ENCODE measurements at regions of chr9 and their contacts with region 1.

Region 1: GRCh38 chr9:20941174-20941690 is 90.2 kb downstream of the HACD4 start:
- DNase-seq: no peak
- ATAC-seq: peak; percentile 75
- H3K4me3 Mint-ChIP-seq: no peak overlapping the region
- H3K27ac Mint-ChIP-seq: no peak overlapping the region
- H3K4me1 Mint-ChIP-seq: peaks cover 3% of the 10 kb centered on the region
- H3K27me3 Mint-ChIP-seq: no peaks in the 10 kb centered on the region
- CTCF ChIP-seq: peak; percentile 90

Region 2: DNA sequence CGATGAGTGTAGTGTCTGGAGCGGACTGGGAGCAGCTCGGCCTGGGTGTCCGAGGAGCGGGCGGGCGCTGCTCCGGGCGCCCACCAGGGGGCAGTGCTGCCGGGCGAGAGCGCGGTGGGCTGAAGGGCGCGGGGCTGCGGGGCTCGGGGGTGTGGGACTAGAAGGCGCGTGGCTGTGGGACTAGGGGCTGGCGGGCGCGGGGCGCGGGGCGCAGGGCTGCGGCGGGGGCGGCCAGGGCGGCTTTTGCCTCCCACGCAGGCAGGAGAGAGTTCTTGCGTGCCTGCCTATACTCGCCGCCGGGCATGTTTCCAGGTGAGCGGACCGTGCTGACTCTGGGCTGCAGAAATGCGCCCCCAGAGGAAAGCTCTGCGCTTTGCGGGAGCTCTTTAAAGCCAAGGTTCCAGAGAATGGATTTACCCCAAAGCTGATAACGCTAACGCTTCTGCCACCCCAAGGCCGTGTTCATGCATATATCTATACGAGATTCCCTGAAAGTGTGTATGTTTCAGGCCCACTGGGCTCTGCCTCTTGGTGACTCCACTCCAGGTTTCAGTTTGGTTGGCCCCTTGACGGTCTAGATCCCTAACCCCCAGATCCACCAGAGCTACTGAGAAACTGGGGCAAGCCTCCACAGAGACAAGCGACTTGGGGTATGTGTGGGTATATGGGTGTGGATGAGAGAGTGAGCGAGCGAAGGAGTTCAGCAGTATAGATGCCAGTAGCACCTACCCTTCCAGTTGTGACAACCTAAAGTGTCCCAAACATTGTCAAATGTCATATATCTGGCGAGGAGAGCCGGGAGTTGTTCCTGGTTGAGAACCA is 1476.3 kb before region 1 on chr9:
- CTCF ChIA-PET with region 1: interaction called, 13 read pairs
- POLR2A ChIA-PET with region 1: no interaction called
- intact Hi-C with region 1: loop called (anchors 2 kb)
- DNase-seq: peak; percentile 77
- ATAC-seq: peak; percentile 93
- H3K4me3 Mint-ChIP-seq: peak overlapping the region; percentile 88
- H3K27ac Mint-ChIP-seq: peak overlapping the region; percentile 69
- H3K4me1 Mint-ChIP-seq: peaks cover 11% of the 10 kb centered on the region
- H3K27me3 Mint-ChIP-seq: no peaks in the 10 kb centered on the region
- CTCF ChIP-seq: peak; percentile 60

Region 3: DNA sequence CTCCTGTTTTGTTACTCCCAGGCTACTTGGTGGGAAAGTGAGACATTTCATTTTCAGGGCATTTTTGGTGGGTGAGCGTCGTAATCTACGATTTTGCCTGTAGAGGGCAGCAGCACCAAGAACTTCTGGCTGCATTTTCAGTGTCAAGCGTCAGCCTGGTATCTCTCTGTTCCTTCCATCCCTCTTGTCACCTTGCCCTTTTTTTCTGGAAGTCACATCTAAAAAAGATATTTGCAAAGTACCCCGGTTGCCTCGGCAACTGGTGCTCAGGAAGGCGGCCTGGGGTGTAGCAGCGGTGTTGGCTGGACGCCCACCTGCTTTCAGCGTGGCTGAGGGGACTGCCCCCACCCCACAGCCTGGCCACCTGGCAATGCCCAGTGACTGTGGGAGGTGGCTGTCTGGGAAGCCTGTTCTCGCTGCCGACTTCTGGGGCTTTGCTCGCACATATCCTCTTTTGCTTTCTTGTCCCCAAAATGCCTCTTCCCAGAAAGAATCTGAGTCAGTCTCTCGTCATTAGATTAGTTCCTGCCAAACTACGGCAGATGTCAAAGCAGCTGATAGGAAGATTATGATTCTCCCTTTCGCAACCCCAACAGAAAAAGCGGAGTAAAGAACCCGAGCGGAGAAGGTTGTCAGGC is 1447.9 kb before region 1 on chr9:
- CTCF ChIA-PET with region 1: no interaction called
- POLR2A ChIA-PET with region 1: no interaction called
- intact Hi-C with region 1: loop called (anchors 1 kb)
- DNase-seq: no peak
- ATAC-seq: peak; percentile 49
- H3K4me3 Mint-ChIP-seq: peak overlapping the region; percentile 16
- H3K27ac Mint-ChIP-seq: no peak overlapping the region
- H3K4me1 Mint-ChIP-seq: peaks cover 8% of the 10 kb centered on the region
- H3K27me3 Mint-ChIP-seq: peaks cover 10% of the 10 kb centered on the region
- CTCF ChIP-seq: no peak

Region 4: DNA sequence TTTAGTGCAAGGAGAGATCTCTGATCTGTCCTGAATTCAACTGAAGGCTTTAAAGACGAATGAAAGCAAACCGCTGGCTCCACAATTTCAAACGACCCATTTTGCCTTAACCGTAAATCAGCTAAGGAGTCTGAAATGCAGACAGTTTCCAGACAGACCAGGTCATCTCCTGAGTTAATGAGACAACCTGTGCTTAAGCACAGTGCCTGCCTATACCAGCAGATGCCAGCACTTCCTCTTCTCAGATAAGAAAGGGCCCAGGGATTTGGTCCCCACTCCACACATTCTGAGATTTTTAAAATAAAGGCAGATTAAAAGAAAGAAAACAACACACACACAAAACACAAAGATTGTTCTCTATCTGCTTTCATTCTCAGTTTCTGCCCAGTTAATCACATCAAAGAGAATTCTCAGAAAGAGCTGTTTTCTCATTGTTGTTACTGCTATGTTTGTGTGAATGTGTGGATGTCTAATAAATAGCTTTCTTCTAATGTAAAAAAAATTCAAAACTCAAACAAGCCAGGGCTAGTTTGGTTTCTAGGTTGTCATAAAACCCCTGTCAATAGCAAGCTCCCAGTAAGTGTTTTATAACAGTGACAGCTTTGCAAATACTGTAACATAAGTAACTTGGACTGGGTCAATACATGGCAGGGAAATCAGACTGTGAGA is 994.7 kb before region 1 on chr9:
- CTCF ChIA-PET with region 1: interaction called, 11 read pairs
- POLR2A ChIA-PET with region 1: no interaction called
- intact Hi-C with region 1: loop called (anchors 1 kb)
- DNase-seq: no peak
- ATAC-seq: no peak
- H3K4me3 Mint-ChIP-seq: no peak overlapping the region
- H3K27ac Mint-ChIP-seq: no peak overlapping the region
- H3K4me1 Mint-ChIP-seq: no peaks in the 10 kb centered on the region
- H3K27me3 Mint-ChIP-seq: peaks cover 18% of the 10 kb centered on the region
- CTCF ChIP-seq: no peak

Region 5: GRCh38 chr9:20356403-20357035 is 584.7 kb before region 1 on chr9:
- CTCF ChIA-PET with region 1: interaction called, 4 read pairs
- POLR2A ChIA-PET with region 1: no interaction called
- intact Hi-C with region 1: loop called (anchors 1 kb)
- DNase-seq: no peak
- ATAC-seq: no peak
- H3K4me3 Mint-ChIP-seq: no peak overlapping the region
- H3K27ac Mint-ChIP-seq: no peak overlapping the region
- H3K4me1 Mint-ChIP-seq: no peaks in the 10 kb centered on the region
- H3K27me3 Mint-ChIP-seq: peaks cover 2% of the 10 kb centered on the region
- CTCF ChIP-seq: no peak

Region 6: DNA sequence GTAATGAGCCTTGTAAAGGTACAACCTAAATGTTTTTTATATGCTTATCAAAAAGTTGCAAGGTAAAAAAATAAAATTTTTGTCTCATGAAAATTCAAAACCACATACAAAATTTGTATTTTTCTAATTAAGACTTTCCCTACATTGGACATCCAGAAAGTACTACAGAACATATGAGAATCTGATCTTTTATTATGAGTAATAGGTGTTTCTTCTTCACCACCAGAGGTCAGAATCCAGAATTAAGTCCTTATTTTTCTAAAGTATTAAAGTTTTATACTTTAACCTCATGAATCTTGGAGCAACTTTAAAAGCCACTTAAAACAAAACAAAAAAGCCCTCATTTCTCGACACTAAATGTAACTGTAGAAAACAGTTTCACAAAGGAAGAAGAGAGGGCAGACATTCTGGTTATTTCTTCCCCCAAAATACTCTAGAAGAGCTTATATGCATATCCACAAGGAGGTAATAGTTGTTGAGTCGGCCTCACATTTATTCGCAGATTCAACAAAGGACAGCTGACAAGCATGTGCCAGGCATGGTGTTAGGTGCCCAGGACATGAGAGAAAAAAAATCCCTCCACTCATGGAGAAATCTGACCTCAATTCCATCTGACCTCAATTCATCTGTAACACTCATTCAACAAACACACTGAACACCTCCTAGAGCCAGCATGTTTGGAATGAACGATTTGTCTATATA is 388.2 kb before region 1 on chr9:
- CTCF ChIA-PET with region 1: interaction called, 8 read pairs
- POLR2A ChIA-PET with region 1: no interaction called
- intact Hi-C with region 1: loop called (anchors 1 kb)
- DNase-seq: no peak
- ATAC-seq: no peak
- H3K4me3 Mint-ChIP-seq: no peak overlapping the region
- H3K27ac Mint-ChIP-seq: no peak overlapping the region
- H3K4me1 Mint-ChIP-seq: peaks cover 11% of the 10 kb centered on the region
- H3K27me3 Mint-ChIP-seq: peaks cover 1% of the 10 kb centered on the region
- CTCF ChIP-seq: no peak

Region 7: GRCh38 chr9:20781092-20781491 is 160.1 kb before region 1 on chr9:
- CTCF ChIA-PET with region 1: no interaction called
- POLR2A ChIA-PET with region 1: no interaction called
- intact Hi-C with region 1: no loop called
- DNase-seq: no peak
- ATAC-seq: no peak
- H3K4me3 Mint-ChIP-seq: no peak overlapping the region
- H3K27ac Mint-ChIP-seq: no peak overlapping the region
- H3K4me1 Mint-ChIP-seq: no peaks in the 10 kb centered on the region
- H3K27me3 Mint-ChIP-seq: no peaks in the 10 kb centered on the region
- CTCF ChIP-seq: no peak

Region 8: DNA sequence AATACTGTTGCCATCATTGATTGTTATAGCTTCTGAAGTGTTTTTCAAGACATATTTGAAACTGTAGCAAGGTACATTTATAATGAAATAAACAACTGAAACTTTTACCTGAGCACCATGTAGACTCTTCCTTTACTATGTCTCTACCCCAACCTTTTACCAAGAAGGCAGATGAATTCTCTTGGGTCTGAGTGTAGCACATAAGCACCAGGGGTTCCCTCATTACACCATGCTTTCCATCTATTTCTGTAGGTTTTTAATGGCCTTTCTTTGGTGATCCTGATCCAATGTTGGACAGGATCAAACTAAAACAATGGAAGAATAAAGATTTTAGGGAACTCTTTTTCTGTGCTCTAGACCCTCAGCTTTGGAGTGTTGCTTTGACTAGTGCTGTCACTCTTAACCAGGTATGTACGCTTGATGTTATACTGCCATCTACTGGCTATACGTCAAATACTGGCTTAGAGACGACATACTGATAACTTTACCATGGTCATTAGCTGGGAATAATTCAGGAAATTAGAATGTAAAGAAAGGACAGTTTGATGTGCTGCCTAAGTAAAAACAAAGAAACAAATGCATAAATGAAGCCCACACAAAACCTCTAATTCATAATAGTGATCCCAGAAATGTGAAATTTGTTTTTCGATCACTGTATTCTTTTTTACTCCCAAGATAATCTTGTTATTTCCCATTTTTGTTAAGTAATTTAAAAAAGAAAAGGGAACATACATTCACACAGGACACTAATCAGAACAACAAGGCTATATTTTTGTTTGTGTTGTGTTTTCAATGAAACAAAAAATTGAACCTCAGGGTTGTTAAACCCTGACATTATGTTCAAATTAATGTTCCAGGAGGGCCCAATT is 169.7 kb after region 1 on chr9:
- CTCF ChIA-PET with region 1: interaction called, 35 read pairs
- POLR2A ChIA-PET with region 1: no interaction called
- intact Hi-C with region 1: loop called (anchors 1 kb)
- DNase-seq: no peak
- ATAC-seq: peak; percentile 71
- H3K4me3 Mint-ChIP-seq: no peak overlapping the region
- H3K27ac Mint-ChIP-seq: no peak overlapping the region
- H3K4me1 Mint-ChIP-seq: no peaks in the 10 kb centered on the region
- H3K27me3 Mint-ChIP-seq: peaks cover 5% of the 10 kb centered on the region
- CTCF ChIP-seq: no peak

Region 9: DNA sequence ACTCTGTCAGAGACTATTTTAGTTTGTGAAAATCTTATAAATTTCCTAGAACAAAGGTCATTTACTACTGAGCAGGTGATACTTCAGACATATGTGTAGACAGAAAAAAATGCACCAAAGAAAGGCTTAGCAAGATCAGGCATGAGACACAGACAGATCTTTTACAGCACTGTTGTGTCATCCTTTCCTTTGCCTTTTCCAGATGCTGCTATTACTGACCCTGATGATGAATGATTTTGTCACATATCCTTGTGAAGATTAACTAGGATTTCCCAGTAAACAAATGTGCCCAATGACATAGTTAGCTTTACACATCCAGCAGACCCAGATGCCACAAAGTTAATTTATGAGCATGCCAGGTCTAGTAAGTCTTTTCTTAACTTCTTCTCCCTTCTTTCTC is 1573.6 kb after region 1 on chr9:
- CTCF ChIA-PET with region 1: no interaction called
- POLR2A ChIA-PET with region 1: no interaction called
- intact Hi-C with region 1: no loop called
- DNase-seq: no peak
- ATAC-seq: no peak
- H3K4me3 Mint-ChIP-seq: no peak overlapping the region
- H3K27ac Mint-ChIP-seq: no peak overlapping the region
- H3K4me1 Mint-ChIP-seq: peaks cover 2% of the 10 kb centered on the region
- H3K27me3 Mint-ChIP-seq: no peaks in the 10 kb centered on the region
- CTCF ChIP-seq: no peak

Measured in activated B cell treated with CpG ODN at 0.5 μM for 24 hours (primary cell).